ENCODE measurements at regions of chr12 and their contacts with region 1.

Region 1: DNA sequence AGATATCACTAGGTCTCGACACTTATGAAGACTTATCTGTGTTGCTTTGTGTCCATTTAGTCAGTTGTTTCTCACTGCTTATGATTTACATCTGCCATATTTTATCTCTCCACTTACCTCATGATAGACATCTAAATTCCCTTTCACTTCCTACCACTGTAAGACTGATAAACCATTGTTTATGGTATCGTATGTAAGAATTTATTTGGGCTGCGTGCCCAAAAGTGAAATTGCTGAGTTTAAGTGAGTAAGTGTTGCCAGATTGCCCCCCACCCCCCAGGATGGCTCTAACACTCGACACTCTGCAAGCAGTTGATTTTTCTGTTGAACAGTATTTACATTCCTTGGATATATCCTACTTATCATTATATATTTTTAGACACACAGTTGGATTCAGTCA is 69.9 kb upstream of the MON2 start:
- DNase-seq: no peak
- ATAC-seq: no peak
- H3K4me3 ChIP-seq: no peak overlapping the region
- H3K27ac ChIP-seq: no peak overlapping the region
- H3K4me1 ChIP-seq: no peaks in the 10 kb centered on the region
- H3K27me3 ChIP-seq: no peaks in the 10 kb centered on the region
- CTCF ChIP-seq: no peak

Region 2: DNA sequence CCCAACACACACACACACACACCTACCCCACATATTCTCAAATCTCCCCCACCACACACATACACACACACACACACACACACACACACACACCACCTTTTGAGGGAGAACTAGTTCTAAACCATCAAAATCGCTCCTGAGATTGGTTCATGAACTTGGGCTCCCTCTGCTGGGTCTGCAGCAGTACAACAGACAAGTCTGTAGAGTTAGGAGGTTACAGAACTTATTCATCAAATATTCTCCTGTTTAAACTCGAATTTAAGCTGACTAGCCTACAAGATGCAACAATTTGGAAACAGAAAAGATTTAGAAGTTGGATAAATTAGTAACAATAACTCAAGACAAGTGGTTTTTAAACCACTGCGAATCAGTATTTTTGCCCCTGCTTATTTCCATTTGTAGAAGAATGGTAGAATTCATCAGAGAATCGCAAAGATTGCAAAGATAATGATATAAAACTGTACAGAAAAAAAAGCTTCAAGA is 273.0 kb before region 1 on chr12:
- intact Hi-C with region 1: no loop called
- DNase-seq: no peak
- ATAC-seq: no peak
- H3K4me3 ChIP-seq: no peak overlapping the region
- H3K27ac ChIP-seq: no peak overlapping the region
- H3K4me1 ChIP-seq: no peaks in the 10 kb centered on the region
- H3K27me3 ChIP-seq: no peaks in the 10 kb centered on the region
- CTCF ChIP-seq: peak; percentile 35

Region 3: DNA sequence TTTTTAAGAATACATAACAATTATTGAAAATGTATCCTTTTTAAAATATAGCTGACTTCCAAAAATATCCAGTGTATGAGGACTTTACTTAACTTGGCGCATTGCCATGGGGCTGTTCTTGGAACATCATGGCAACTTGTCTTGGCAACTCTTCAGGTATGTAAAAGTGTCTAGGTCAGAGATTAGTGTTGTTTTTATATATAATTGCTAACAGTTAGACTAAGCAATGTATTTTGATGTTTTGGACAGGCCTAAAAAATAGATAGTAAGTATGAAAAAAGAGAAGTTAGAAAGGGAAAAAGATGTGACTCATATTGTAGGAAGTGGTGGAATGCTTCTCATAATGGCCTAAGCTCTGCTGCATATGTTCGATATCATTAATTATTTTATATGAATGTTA is 140.8 kb after region 1 on chr12:
- intact Hi-C with region 1: loop called in 1 of 2 experiments (anchors 10 kb)
- DNase-seq: no peak
- ATAC-seq: peak in 1 of 4 donors; percentile 56
- H3K4me3 ChIP-seq: no peak overlapping the region
- H3K27ac ChIP-seq: no peak overlapping the region
- H3K4me1 ChIP-seq: peaks cover 6% of the 10 kb centered on the region
- H3K27me3 ChIP-seq: no peaks in the 10 kb centered on the region
- CTCF ChIP-seq: no peak